ENCODE measurements at regions of chr17 and their contacts with region 1.

Region 1: DNA sequence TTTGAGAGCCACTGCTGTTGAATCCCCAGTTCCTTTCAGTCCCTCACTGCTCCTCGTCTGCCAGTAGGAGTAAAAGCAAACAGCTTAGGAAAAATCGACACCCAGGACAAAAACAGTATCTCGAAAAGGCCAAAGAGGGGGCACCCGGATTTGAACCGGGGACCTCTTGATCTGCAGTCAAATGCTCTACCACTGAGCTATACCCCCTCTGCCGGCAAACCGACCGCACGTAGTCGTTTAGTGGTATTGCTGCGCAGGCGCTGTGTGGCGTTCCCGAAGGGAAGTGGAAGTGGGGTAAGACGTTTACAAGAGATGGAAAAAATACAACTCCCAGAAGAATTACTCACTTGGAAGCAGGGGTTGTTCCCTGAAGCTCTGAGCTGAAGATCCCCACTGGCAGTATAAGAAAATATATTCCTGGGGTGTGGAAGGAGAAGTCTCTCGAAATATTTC is 2.2 kb upstream of the PLXDC1 start:
- DNase-seq: peak; percentile 87 to 93 (median 92)
- H3K4me3 ChIP-seq: peak overlapping the region; percentile 82 to 98
- H3K4me3 Mint-ChIP-seq: peak overlapping the region; percentile 96 to 100 (median 99)
- H3K27ac ChIP-seq: peak overlapping the region; percentile 66
- H3K27ac Mint-ChIP-seq: peak overlapping the region; percentile 93 to 100 (median 98)
- H3K4me1 ChIP-seq: peaks cover 33% of the 10 kb centered on the region
- H3K4me1 Mint-ChIP-seq: peaks cover 28 to 57% (median 43%) of the 10 kb centered on the region in 4 donors
- H3K27me3 ChIP-seq: no peaks in the 10 kb centered on the region
- H3K27me3 Mint-ChIP-seq: peaks cover 3 to 18% of the 10 kb centered on the region in 2 donors

Region 2: GRCh38 chr17:38674749-38675615 is 478.6 kb before region 1 on chr17 and contains the start of gene EPOP:
- CTCF ChIA-PET with region 1: no interaction called
- POLR2A ChIA-PET with region 1: no interaction called
- intact Hi-C with region 1: loop called (anchors 5 kb)
- DNase-seq: peak; percentile 68 to 82 (median 74)
- H3K4me3 ChIP-seq: peak within 1 kb of the TSS in 1 of 2 donors; percentile 52
- H3K4me3 Mint-ChIP-seq: peak within 1 kb of the TSS; percentile 39 to 82 (median 73)
- H3K27ac ChIP-seq: peak within 1 kb of the TSS; percentile 9
- H3K27ac Mint-ChIP-seq: peak within 1 kb of the TSS in 4 of 7 donors; percentile 31 to 47 (median 40)
- H3K4me1 ChIP-seq: peaks cover 11% of the 10 kb centered on the region
- H3K4me1 Mint-ChIP-seq: peaks cover 5 to 25% (median 11%) of the 10 kb centered on the region in 4 donors
- H3K27me3 ChIP-seq: peaks cover 12% of the 10 kb centered on the region
- H3K27me3 Mint-ChIP-seq: peaks cover 17 to 30% of the 10 kb centered on the region in 2 donors
- total RNA-seq, gene EPOP: 0.09 to 0.25 TPM

Region 3: DNA sequence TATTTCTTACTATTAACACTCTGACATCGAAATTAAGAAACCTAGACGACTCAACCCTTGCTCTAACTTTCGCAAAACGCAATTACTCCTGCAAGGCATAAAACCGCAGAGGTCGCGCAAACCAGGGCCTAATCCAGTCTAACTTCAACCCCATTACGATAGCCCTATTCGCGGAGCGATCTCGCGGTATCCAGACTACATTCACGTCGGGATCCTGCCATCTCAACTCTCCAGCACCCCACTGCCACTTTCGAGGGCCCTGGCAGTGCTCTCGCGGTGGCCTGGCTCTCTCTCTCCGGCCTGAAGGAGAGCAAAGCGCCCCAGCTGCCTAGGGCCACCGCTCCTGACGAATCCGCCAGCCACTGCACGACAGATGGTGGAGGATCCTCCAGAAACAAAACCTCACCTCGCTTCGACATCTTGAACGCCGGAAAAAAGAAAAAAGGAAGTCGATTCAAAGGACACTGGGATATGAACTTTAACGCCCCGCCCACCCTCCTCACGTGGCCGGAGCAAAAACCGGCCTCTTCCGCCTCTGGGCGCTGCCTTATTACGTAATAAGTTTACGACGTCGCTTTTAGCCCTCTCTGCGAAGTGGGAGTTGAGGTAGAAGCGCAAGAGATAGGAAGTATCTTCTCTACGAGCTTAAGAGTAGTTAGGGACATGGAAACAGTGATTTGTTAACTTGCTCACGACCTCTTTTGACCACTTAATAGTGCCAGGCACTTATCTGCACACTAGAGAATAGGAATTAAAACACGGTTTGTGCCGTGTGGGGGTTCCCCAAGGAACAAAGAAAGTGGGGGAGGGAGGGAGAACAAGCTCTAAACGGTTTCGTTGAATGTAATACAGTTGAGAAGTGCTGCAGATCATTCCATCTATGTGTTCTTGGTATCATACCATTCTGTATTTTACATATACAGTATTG is 300.1 kb before region 1 on chr17 and contains the start of gene RPL23:
- CTCF ChIA-PET with region 1: interaction called, 6 read pairs
- POLR2A ChIA-PET with region 1: interaction called, 20 read pairs
- intact Hi-C with region 1: loop called (anchors 5 kb)
- DNase-seq: peak; percentile 90 to 94 (median 92)
- H3K4me3 ChIP-seq: peak within 1 kb of the TSS; percentile 75 to 81
- H3K4me3 Mint-ChIP-seq: peak within 1 kb of the TSS; percentile 88 to 97 (median 95)
- H3K27ac ChIP-seq: peak within 1 kb of the TSS; percentile 87
- H3K27ac Mint-ChIP-seq: peak within 1 kb of the TSS; percentile 97 to 100 (median 99)
- H3K4me1 ChIP-seq: peaks cover 34% of the 10 kb centered on the region
- H3K4me1 Mint-ChIP-seq: peaks cover 30 to 45% (median 37%) of the 10 kb centered on the region in 4 donors
- H3K27me3 ChIP-seq: no peaks in the 10 kb centered on the region
- H3K27me3 Mint-ChIP-seq: no peaks in the 10 kb centered on the region
- total RNA-seq, gene RPL23: 1,511 to 1,572 TPM

Region 4: GRCh38 chr17:38982858-38983746 is 170.5 kb before region 1 on chr17:
- CTCF ChIA-PET with region 1: interaction called, 289 read pairs
- POLR2A ChIA-PET with region 1: interaction called, 64 read pairs
- intact Hi-C with region 1: loop called (anchors 1 kb)
- DNase-seq: peak; percentile 58 to 67 (median 59)
- H3K4me3 ChIP-seq: no peak overlapping the region
- H3K4me3 Mint-ChIP-seq: no peak overlapping the region
- H3K27ac ChIP-seq: no peak overlapping the region
- H3K27ac Mint-ChIP-seq: no peak overlapping the region
- H3K4me1 ChIP-seq: no peaks in the 10 kb centered on the region
- H3K4me1 Mint-ChIP-seq: peaks cover 0 to 4% (median 2%) of the 10 kb centered on the region in 4 donors
- H3K27me3 ChIP-seq: no peaks in the 10 kb centered on the region
- H3K27me3 Mint-ChIP-seq: peaks cover 0 to 1% of the 10 kb centered on the region in 2 donors

Region 5: GRCh38 chr17:39045948-39046679 is 107.5 kb before region 1 on chr17:
- CTCF ChIA-PET with region 1: no interaction called
- POLR2A ChIA-PET with region 1: no interaction called
- intact Hi-C with region 1: no loop called
- DNase-seq: no peak
- H3K4me3 ChIP-seq: no peak overlapping the region
- H3K4me3 Mint-ChIP-seq: no peak overlapping the region
- H3K27ac ChIP-seq: no peak overlapping the region
- H3K27ac Mint-ChIP-seq: no peak overlapping the region
- H3K4me1 ChIP-seq: no peaks in the 10 kb centered on the region
- H3K4me1 Mint-ChIP-seq: no peaks in the 10 kb centered on the region
- H3K27me3 ChIP-seq: no peaks in the 10 kb centered on the region
- H3K27me3 Mint-ChIP-seq: peaks cover 3% of the 10 kb centered on the region in 2 donors

Region 6: DNA sequence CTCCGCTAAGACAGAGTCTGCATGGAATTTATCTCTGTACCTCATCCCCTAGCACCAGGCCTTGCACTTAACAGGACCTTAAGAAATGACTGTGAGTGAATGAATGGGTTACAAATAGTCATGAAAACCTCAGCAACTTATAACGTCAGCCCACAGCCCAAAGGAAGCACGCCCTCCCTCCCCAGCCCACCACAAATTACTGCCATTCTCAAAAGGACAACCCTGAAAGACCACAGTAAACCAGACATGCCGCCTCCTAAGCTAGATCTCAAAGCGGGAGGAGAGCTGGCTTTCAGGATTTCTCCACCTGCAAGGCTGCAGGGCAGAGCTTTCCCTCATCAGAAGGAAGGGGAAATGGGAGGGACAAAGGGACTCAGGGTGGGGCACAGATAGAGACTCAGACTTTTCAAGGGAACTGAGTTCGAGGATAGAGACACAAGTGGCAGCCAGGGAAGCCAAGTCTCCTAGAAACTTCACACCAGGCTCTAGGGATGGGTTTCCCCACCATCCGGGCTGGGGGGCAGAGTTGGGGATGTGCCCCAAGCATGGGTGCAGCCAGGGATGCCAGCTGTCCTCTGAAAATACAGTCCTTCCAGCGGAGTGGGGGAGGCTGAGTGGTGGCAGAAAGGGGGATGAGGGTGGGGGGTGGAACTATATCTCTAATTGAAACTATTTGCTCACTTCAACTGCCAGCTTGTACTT is 58.9 kb before region 1 on chr17:
- CTCF ChIA-PET with region 1: interaction called, 86 read pairs
- POLR2A ChIA-PET with region 1: interaction called, 76 read pairs
- intact Hi-C with region 1: loop called (anchors 1 kb)
- DNase-seq: peak; percentile 32 to 74 (median 69)
- H3K4me3 ChIP-seq: peak overlapping the region in 1 of 2 donors; percentile 29
- H3K4me3 Mint-ChIP-seq: peak overlapping the region; percentile 72 to 91 (median 84)
- H3K27ac ChIP-seq: peak overlapping the region; percentile 42
- H3K27ac Mint-ChIP-seq: peak overlapping the region; percentile 82 to 98 (median 96)
- H3K4me1 ChIP-seq: peaks cover 89% of the 10 kb centered on the region
- H3K4me1 Mint-ChIP-seq: peaks cover 65 to 87% (median 75%) of the 10 kb centered on the region in 4 donors
- H3K27me3 ChIP-seq: no peaks in the 10 kb centered on the region
- H3K27me3 Mint-ChIP-seq: no peaks in the 10 kb centered on the region

Region 7: GRCh38 chr17:39199820-39200069 is 46.1 kb after region 1 on chr17:
- CTCF ChIA-PET with region 1: interaction called, 14 read pairs
- POLR2A ChIA-PET with region 1: interaction called, 33 read pairs
- intact Hi-C with region 1: loop called (anchors 1 kb)
- DNase-seq: peak in 4 of 5 donors; percentile 92 to 94 (median 92)
- H3K4me3 ChIP-seq: peak overlapping the region; percentile 77 to 93
- H3K4me3 Mint-ChIP-seq: peak overlapping the region; percentile 86 to 98 (median 96)
- H3K27ac ChIP-seq: peak overlapping the region; percentile 98
- H3K27ac Mint-ChIP-seq: peak overlapping the region; percentile 96 to 100 (median 100)
- H3K4me1 ChIP-seq: peaks cover 58% of the 10 kb centered on the region
- H3K4me1 Mint-ChIP-seq: peaks cover 37 to 73% (median 58%) of the 10 kb centered on the region in 4 donors
- H3K27me3 ChIP-seq: no peaks in the 10 kb centered on the region
- H3K27me3 Mint-ChIP-seq: no peaks in the 10 kb centered on the region

Measured in CD4-positive, alpha-beta memory T cell (primary cell).